ENCODE measurements at regions of chr9 and their contacts with region 1.

Region 1: DNA sequence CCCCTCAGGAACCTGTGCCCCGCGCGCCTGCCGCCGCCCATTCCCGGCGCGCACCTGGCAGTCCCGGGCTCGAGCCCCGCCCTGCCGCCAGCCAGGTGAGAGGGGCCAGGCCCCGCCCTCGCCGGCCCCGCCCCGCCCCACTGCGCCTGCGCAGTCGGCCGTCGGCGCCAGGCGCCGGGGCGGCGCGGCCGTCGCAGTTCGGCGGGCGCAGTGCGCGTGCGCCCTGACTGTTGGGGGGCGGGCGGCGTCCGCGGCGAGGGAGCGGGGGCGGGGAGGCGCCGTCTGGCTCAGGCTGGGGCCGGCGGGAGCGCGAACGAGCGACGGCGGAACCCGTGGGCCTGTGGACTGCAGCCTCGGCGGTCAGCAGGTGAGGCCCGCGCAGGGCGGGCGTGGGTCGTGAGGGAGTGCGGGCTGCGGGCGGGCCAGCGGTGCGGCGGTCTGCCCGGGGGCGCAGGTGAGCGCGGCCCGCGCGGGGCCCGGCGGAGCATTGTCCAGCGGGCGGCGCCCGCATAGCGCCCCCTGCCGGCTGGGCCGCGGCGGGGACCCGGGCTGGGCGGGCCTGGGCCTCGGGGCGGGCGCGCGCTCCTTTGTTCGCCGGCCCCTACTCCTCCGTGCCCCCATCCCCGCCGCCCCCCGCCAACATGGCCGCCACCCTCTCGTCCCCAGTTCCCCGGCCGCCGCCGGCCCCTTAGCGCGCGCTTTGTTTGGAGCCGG is at the start of gene SPIN1:
- DNase-seq: peak; percentile 83
- ATAC-seq: peak; percentile 88
- H3K4me3 Mint-ChIP-seq: peak within 1 kb of the TSS; percentile 91
- H3K27ac Mint-ChIP-seq: peak within 1 kb of the TSS; percentile 93
- H3K4me1 Mint-ChIP-seq: peaks cover 35% of the 10 kb centered on the region
- H3K27me3 Mint-ChIP-seq: no peaks in the 10 kb centered on the region
- CTCF ChIP-seq: peak; percentile 40
- total RNA-seq, gene SPIN1: 31.2 to 32.0 TPM

Region 2: DNA sequence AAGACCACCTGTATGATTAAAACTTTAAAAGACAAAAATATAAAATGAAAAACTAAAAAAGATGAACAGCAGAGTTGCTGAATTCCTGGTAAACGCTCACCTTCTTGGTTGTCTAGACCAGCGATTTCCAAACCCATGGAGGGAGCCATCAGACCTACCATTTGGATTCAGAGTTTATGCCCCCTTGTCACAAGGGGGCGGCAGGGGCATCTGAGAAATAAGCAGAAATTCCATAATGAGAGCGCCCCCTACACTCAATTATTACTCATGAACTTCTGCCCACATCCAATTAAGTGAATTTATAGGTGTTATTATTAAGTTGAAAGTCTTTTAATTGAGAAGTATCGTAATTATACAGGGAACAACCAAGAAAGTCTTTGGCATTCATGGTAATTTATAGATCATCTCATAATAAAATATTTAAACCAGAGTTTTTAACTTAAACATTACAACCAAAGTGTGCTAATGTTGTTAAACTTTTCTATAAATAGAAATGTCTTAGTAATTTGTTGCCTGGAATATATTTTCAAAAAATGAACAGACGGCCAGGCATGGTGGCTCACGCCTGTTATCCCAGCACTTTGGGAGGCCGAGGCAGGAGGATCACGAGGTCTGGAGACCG is 214.8 kb before region 1 on chr9:
- CTCF ChIA-PET with region 1: interaction called, 3 read pairs
- POLR2A ChIA-PET with region 1: no interaction called
- intact Hi-C with region 1: loop called (anchors 5 kb)
- DNase-seq: peak; percentile 78
- ATAC-seq: peak; percentile 70
- H3K4me3 Mint-ChIP-seq: no peak overlapping the region
- H3K27ac Mint-ChIP-seq: no peak overlapping the region
- H3K4me1 Mint-ChIP-seq: no peaks in the 10 kb centered on the region
- H3K27me3 Mint-ChIP-seq: peaks cover 5% of the 10 kb centered on the region
- CTCF ChIP-seq: peak; percentile 92

Region 3: DNA sequence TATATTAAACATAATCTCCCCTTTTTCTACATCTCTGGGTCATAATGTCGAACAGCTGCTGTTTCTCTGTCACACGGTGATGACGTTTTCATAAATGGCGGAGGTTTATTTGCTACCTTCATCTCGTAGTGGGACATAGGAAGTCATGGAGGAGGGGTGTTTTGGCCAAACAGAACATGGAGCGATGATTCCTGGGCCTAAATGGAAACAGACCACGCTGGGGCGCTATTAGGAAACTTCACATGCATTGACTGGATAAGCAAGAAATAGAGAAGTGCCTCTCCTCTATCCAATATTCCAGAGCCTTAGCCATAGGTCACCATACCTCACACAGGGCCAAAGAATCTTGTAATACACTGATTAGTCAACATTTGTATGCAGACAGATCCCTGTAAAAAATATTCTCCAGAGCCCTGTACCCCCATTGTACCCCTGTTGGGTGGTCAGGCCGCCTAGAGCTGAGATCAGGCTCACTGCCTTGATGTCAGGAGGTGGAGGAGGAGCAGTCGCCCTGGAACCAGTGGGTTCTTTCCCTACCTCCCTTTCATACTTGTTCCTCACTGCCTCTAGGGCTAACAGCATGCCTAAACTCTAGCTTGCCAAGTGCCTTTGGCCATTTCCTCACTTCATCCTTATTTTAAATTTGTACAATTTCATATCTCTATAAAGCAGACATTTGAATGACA is 77.9 kb before region 1 on chr9:
- CTCF ChIA-PET with region 1: no interaction called
- POLR2A ChIA-PET with region 1: no interaction called
- intact Hi-C with region 1: loop called (anchors 5 kb)
- DNase-seq: no peak
- ATAC-seq: no peak
- H3K4me3 Mint-ChIP-seq: no peak overlapping the region
- H3K27ac Mint-ChIP-seq: peak overlapping the region; percentile 28
- H3K4me1 Mint-ChIP-seq: peaks cover 43% of the 10 kb centered on the region
- H3K27me3 Mint-ChIP-seq: peaks cover 2% of the 10 kb centered on the region
- CTCF ChIP-seq: no peak